CD8-positive, alpha-beta T cell (primary cell): ENCODE measurements at regions of chr14 and their contacts with region 1.

Region 1: DNA sequence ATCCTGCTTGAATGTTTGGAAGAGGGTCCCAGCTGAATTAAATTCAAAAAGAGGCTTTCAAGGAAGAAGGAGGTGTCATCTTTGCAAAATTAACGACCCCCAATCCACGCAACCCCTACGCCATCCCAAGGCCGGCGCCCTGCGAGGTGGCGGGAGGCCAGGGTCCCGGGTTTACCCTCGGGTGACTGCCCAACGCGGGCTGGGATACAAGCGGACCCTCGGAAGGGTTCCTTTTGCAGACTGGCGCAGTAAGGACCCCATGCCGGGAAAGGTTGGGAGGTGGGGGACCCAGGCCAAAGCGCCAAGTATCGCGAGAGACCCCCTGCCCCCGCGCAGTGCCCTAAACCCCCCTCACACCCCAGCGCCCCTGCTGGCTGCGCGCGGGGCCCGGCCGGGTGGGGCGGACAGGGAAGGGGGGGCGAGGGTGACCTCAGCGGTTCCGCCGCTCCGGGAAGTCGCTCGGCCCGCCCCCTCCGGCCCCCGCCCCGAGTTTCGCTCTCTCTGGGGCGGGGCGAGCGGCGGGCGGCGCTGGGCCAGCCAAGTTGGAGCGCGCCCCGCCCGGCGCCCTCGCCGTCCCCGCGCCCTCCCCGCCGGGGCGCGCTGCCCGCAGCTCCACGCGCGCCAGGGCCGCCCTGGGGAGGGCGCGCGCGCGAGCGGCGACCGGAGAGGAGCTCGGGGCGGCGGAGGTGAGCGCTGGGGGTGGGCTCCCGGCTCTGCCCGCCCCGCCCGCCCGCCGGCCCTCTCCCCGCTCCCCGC is 708 bp upstream of the ZBTB42 start:
- DNase-seq: peak; percentile 44 to 93 (median 83)
- ATAC-seq: peak; percentile 67
- H3K4me3 ChIP-seq: peak overlapping the region; percentile 48 to 50
- H3K4me3 Mint-ChIP-seq: peak overlapping the region; percentile 79
- H3K27ac ChIP-seq: peak overlapping the region; percentile 40 to 91
- H3K27ac Mint-ChIP-seq: peak overlapping the region; percentile 74
- H3K4me1 ChIP-seq: peaks cover 30% of the 10 kb centered on the region
- H3K4me1 Mint-ChIP-seq: peaks cover 32% of the 10 kb centered on the region
- H3K27me3 ChIP-seq: no peaks in the 10 kb centered on the region
- H3K27me3 Mint-ChIP-seq: no peaks in the 10 kb centered on the region
- CTCF ChIP-seq: no peak

Region 2: DNA sequence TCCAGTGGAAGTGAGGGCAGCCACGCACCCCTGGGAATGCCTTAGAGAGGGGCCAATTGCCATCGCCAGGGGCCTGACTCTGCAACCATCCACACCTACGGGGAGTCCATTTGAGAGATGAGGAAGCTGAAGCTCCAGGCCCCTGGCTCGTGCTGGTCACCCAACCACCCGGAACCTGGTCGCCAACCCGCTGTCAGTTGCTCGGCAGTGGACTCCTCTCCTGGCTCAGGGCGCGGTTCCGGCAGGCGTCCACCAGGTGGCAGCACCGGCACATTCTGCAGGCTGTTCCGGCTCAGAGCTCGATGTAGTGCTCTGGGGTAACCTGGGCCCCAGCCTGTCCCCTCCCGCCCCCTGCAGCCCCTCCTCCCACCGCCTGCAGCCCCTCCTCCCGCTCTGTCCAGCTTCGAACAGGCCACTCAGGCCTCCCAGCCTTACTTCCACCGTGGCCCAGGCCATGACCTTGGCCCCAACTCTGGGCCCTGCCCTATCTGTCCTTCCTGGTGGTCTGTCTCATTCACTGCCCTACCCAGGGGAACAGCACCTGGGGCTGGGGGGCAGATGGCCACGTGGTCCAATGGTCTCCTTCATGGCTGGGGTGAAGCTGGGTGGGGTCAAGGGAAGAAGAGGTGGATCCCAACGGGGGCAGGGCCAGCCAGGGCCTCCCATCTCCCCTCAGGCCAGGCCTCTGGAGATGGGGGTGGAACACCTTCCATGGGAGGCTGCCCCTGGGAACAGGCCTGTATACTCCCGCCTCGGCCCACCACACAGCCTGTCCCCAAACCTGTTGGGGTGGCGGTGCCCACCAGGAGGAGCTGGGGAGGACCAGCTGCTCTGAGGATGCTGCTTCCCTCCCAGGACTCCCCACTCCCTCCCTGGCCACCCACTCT is 31.5 kb before region 1 on chr14:
- CTCF ChIA-PET with region 1: interaction called, 9 read pairs
- POLR2A ChIA-PET with region 1: interaction called, 6 read pairs
- intact Hi-C with region 1: loop called in 1 of 2 experiments (anchors 1 kb)
- DNase-seq: peak; percentile 80 to 97 (median 89)
- ATAC-seq: peak; percentile 97
- H3K4me3 ChIP-seq: no peak overlapping the region
- H3K4me3 Mint-ChIP-seq: no peak overlapping the region
- H3K27ac ChIP-seq: no peak overlapping the region
- H3K27ac Mint-ChIP-seq: no peak overlapping the region
- H3K4me1 ChIP-seq: peaks cover 5% of the 10 kb centered on the region
- H3K4me1 Mint-ChIP-seq: peaks cover 4% of the 10 kb centered on the region
- H3K27me3 ChIP-seq: no peaks in the 10 kb centered on the region
- H3K27me3 Mint-ChIP-seq: no peaks in the 10 kb centered on the region
- CTCF ChIP-seq: peak; percentile 89

Region 3: DNA sequence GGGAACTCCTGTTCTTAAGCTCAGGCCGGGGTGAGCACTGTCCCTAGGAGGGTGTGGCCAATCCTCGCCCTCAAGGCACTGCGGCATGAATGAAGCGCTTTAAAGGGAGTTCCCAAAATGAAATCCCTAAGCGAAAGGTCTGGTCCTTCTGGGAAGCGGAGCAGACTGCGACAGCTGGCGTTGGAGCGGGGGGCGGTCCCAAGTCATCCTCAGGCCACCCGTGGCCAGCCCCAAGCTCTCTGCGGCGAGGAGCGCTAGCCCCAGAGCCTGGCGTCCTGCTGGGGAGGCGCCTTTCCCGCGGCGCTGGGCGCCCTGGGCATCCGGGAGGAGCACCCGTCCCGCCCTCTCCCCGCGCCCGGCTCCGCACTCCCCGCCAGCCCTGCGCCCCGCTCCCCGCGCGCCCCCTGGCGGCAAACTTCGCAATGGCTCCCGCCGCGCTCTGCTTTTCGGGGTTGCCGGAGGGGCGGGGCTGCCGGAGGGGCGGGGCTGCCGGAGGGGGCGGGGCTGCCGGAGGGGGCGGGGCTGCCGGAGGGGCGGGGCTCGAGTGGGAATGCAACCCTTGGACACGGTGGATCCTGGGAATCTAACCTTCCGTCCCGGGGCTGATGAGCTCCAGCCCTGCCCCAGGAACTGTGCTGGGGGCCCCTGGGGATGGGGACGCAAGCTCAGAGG is 26.1 kb after region 1 on chr14:
- CTCF ChIA-PET with region 1: interaction called, 8 read pairs
- POLR2A ChIA-PET with region 1: interaction called, 15 read pairs
- intact Hi-C with region 1: loop called (anchors 1 kb)
- DNase-seq: peak; percentile 88 to 98 (median 95)
- ATAC-seq: peak; percentile 91
- H3K4me3 ChIP-seq: peak overlapping the region; percentile 66 to 67
- H3K4me3 Mint-ChIP-seq: peak overlapping the region; percentile 80
- H3K27ac ChIP-seq: no peak overlapping the region
- H3K27ac Mint-ChIP-seq: no peak overlapping the region
- H3K4me1 ChIP-seq: peaks cover 20% of the 10 kb centered on the region
- H3K4me1 Mint-ChIP-seq: peaks cover 25% of the 10 kb centered on the region
- H3K27me3 ChIP-seq: peaks cover 0 to 5% of the 10 kb centered on the region in 2 experiments
- H3K27me3 Mint-ChIP-seq: no peaks in the 10 kb centered on the region
- CTCF ChIP-seq: peak; percentile 79

Region 4: DNA sequence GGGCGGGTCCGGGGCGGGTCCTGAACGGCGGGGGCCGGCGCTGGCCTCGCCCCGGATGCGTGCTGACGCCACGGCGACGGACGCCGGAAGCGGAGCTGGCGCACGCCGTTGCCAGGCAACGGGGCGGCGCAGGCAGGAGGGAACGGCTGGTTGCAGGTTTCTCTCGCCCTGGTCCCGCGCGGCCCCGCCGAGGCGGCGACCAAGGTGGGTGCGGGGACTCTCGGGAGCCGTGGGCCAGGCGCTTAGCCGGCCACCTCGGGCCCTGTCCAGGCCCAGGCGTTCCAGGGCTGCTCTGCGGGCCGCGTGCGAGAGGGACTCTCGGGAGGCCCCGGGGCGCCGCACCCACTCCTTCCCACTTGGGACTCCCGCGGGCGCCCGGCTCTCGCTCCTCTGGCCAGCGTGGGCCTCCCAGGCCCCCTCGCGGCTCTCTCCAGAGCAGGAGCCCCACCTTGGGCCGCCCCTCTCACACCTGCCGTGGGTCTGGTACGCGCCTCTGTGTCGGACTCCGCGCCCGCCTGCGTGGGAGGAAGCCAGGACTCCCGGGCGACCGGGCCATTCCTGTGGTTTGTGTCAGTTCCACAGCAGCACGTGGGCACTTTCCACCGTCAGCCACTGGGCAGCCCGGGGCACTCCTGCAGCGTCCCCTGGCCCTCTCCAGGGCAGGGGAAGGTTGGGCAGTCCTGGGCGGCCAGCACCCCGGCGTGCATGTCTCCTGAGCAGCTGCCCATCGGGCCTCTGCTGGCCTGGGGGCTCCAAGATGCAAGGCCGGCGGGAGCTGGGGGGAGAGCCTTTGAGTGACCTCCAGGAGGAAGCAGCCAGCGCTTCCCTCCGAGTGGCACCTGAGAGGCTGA is 185.7 kb after region 1 on chr14 and contains the start of gene CLBA1:
- CTCF ChIA-PET with region 1: no interaction called
- POLR2A ChIA-PET with region 1: no interaction called
- intact Hi-C with region 1: loop called in 1 of 2 experiments (anchors 5 kb)
- DNase-seq: peak; percentile 75 to 97 (median 87)
- ATAC-seq: peak; percentile 94
- H3K4me3 ChIP-seq: peak within 1 kb of the TSS; percentile 54 to 60
- H3K4me3 Mint-ChIP-seq: peak within 1 kb of the TSS; percentile 78
- H3K27ac ChIP-seq: peak within 1 kb of the TSS; percentile 60 to 73
- H3K27ac Mint-ChIP-seq: peak within 1 kb of the TSS; percentile 57
- H3K4me1 ChIP-seq: peaks cover 8% of the 10 kb centered on the region
- H3K4me1 Mint-ChIP-seq: peaks cover 5% of the 10 kb centered on the region
- H3K27me3 ChIP-seq: no peaks in the 10 kb centered on the region
- H3K27me3 Mint-ChIP-seq: peaks cover 6% of the 10 kb centered on the region
- CTCF ChIP-seq: no peak
- total RNA-seq, gene CLBA1: 0.84 to 1.0 TPM

Region 5: GRCh38 chr14:105248368-105248756 is 448.2 kb after region 1 on chr14 and contains the start of gene BTBD6:
- CTCF ChIA-PET with region 1: no interaction called
- POLR2A ChIA-PET with region 1: no interaction called
- intact Hi-C with region 1: loop called in 1 of 2 experiments (anchors 10 kb)
- DNase-seq: peak; percentile 80 to 95 (median 88)
- ATAC-seq: peak; percentile 91
- H3K4me3 ChIP-seq: peak within 1 kb of the TSS; percentile 60 to 73
- H3K4me3 Mint-ChIP-seq: peak within 1 kb of the TSS; percentile 78
- H3K27ac ChIP-seq: peak within 1 kb of the TSS; percentile 51 to 73
- H3K27ac Mint-ChIP-seq: peak within 1 kb of the TSS; percentile 75
- H3K4me1 ChIP-seq: peaks cover 21% of the 10 kb centered on the region
- H3K4me1 Mint-ChIP-seq: peaks cover 33% of the 10 kb centered on the region
- H3K27me3 ChIP-seq: no peaks in the 10 kb centered on the region
- H3K27me3 Mint-ChIP-seq: no peaks in the 10 kb centered on the region
- CTCF ChIP-seq: no peak
- total RNA-seq, gene BTBD6: 34.1 to 34.4 TPM

Region 6: GRCh38 chr14:105314287-105315200 is 514.4 kb after region 1 on chr14 and contains the start of gene PACS2:
- CTCF ChIA-PET with region 1: no interaction called
- POLR2A ChIA-PET with region 1: no interaction called
- intact Hi-C with region 1: loop called in 1 of 2 experiments (anchors 5 kb)
- DNase-seq: peak; percentile 47 to 96 (median 76)
- ATAC-seq: peak; percentile 73
- H3K4me3 ChIP-seq: peak within 1 kb of the TSS; percentile 55 to 60
- H3K4me3 Mint-ChIP-seq: peak within 1 kb of the TSS; percentile 91
- H3K27ac ChIP-seq: peak within 1 kb of the TSS; percentile 24 to 52
- H3K27ac Mint-ChIP-seq: peak within 1 kb of the TSS; percentile 85
- H3K4me1 ChIP-seq: peaks cover 21% of the 10 kb centered on the region
- H3K4me1 Mint-ChIP-seq: peaks cover 24% of the 10 kb centered on the region
- H3K27me3 ChIP-seq: no peaks in the 10 kb centered on the region
- H3K27me3 Mint-ChIP-seq: no peaks in the 10 kb centered on the region
- CTCF ChIP-seq: no peak
- total RNA-seq, gene PACS2: 46.5 to 56.1 TPM